ENCODE measurements at regions of chr5 and their contacts with region 1.

Region 1: GRCh38 chr5:179818746-179819295 is 1.9 kb upstream of the SQSTM1 start:
- DNase-seq: peak; percentile 81
- H3K4me3 ChIP-seq: peak overlapping the region; percentile 44
- H3K27ac ChIP-seq: peak overlapping the region; percentile 99
- H3K27me3 ChIP-seq: no peaks in the 10 kb centered on the region
- CTCF ChIP-seq: no peak

Region 2: DNA sequence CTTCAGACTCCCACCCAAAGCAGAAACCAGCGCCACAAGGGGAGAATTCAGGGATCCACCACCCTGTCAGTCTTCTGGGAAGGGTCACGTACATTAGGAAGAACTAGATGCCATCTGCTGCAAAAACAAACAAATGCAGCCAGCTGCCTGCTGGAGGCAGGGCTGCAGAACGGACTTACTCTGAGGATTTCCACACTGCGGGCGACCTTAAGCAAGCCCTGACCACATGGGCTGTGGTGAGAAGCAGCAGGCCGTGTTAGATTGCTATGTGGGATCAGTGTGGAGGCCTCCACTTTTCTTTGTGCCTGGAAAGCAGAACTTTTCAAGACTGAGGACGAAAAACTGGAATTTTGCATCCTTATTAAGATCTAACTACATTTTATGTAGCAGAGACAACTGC is 38.5 kb before region 1 on chr5:
- CTCF ChIA-PET with region 1: no interaction called
- POLR2A ChIA-PET with region 1: no interaction called
- DNase-seq: no peak
- H3K4me3 ChIP-seq: no peak overlapping the region
- H3K27ac ChIP-seq: no peak overlapping the region
- H3K27me3 ChIP-seq: no peaks in the 10 kb centered on the region
- CTCF ChIP-seq: no peak

Region 3: GRCh38 chr5:179795863-179796833 is 22.7 kb before region 1 on chr5:
- CTCF ChIA-PET with region 1: interaction called, 3 read pairs
- POLR2A ChIA-PET with region 1: interaction called, 12 read pairs
- DNase-seq: no peak
- H3K4me3 ChIP-seq: peak overlapping the region; percentile 60
- H3K27ac ChIP-seq: peak overlapping the region; percentile 52
- H3K27me3 ChIP-seq: no peaks in the 10 kb centered on the region
- CTCF ChIP-seq: peak; percentile 51

Region 4: DNA sequence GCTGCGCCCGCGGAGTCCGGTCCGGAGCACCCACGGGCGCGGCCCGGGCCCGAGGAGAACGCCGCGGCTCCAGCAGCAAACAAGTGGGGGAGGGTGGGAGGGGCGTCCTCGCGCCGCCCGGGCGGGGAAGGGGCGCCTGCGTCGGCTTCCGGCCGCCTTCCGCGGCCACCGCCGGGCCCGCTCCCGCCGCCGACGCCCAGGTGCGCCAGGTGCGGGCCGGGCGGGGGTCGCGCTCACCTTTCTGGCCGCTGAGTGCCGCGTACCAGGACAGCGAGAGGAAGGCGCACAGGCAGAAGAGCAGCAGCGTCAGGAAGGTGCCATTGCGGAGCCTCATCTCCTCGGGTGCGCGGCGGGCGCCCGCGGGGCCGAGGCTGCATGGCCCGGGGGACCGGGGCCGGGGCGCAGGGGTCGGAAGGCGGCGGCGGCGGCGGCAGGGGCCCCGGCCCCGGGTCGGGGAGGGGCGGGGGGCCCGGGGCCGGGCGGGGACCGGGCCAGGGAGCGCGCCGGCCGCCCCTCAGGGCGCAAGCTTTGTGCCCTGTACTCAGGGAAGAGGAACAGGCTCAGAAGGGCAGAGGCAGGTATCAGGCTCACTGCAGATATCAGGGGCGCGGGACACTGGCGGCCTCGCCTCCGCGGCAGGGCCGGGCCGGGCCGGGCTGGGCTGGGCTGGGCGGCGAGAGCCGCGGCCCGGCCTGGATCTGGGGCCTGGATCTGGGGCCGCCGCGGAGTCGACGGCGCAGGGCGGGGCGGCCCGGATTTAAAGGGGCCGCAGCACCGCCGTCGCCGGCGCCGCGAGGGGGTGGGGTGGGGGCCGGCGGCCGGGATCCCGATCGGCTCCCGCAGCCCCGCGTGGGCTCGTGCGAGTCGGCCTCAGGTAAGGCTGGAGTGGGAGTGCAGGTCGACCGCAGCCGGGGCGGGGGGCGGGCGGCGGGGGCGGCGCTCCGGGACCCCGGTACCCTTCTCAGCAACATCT is 12.3 kb before region 1 on chr5 and contains the start of gene MGAT4B:
- CTCF ChIA-PET with region 1: interaction called, 8 read pairs
- POLR2A ChIA-PET with region 1: interaction called, 10 read pairs
- DNase-seq: no peak
- H3K4me3 ChIP-seq: peak within 1 kb of the TSS; percentile 77
- H3K27ac ChIP-seq: peak within 1 kb of the TSS; percentile 21
- H3K27me3 ChIP-seq: no peaks in the 10 kb centered on the region
- CTCF ChIP-seq: no peak
- polyA plus RNA-seq, gene MGAT4B: 102 and 149 TPM in 2 replicates

Region 5: DNA sequence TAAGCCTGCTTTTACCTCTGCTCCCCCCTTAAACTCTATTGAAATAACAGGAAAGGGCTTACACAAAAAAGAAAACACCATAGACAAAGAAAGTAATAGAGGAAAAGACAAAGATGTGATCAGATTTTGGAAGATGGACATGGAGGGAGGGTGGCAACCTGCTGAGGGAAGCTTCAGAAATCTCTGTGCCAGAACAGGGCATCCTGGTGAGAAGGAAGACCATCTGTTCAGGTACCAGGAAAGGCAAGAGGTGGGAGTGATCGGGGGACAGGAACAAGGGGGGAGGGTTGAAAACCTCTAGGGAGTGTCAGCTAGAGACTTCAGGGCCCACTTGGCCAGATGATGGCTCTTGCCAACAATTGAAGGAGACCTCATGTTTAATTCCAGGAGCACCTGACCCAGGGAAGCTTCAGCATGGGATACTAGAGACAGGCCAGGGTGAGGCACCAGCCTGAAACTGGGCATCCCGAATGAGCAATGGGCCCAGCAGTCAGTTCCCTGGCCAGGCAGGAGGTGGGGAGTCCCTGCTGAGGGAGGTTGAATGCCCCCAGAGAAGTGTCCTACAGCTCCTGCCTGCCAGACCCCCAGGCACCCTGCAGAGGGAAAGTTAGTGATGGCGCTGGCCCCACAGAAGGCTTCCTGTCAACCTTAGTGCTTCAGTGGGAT is 10.1 kb after region 1 on chr5:
- CTCF ChIA-PET with region 1: no interaction called
- POLR2A ChIA-PET with region 1: interaction called, 14 read pairs
- DNase-seq: no peak
- H3K4me3 ChIP-seq: no peak overlapping the region
- H3K27ac ChIP-seq: peak overlapping the region; percentile 39
- H3K27me3 ChIP-seq: no peaks in the 10 kb centered on the region
- CTCF ChIP-seq: no peak

Region 6: GRCh38 chr5:179974946-179975712 is 156.3 kb after region 1 on chr5:
- CTCF ChIA-PET with region 1: no interaction called
- POLR2A ChIA-PET with region 1: no interaction called
- DNase-seq: no peak
- H3K4me3 ChIP-seq: no peak overlapping the region
- H3K27ac ChIP-seq: no peak overlapping the region
- H3K27me3 ChIP-seq: no peaks in the 10 kb centered on the region
- CTCF ChIP-seq: peak; percentile 33; the same call in 1 of the 2 replicates